ENCODE measurements at regions of chr11 and their contacts with region 1.

Region 1: GRCh38 chr11:77411717-77412441 is 62.0 kb downstream of the PAK1 start:
- DNase-seq: peak; percentile 86
- H3K4me3 Mint-ChIP-seq: peak overlapping the region; percentile 88
- H3K27ac Mint-ChIP-seq: peak overlapping the region; percentile 74
- H3K4me1 Mint-ChIP-seq: peaks cover 52% of the 10 kb centered on the region
- H3K27me3 Mint-ChIP-seq: no peaks in the 10 kb centered on the region
- CTCF ChIP-seq: no peak

Region 2: DNA sequence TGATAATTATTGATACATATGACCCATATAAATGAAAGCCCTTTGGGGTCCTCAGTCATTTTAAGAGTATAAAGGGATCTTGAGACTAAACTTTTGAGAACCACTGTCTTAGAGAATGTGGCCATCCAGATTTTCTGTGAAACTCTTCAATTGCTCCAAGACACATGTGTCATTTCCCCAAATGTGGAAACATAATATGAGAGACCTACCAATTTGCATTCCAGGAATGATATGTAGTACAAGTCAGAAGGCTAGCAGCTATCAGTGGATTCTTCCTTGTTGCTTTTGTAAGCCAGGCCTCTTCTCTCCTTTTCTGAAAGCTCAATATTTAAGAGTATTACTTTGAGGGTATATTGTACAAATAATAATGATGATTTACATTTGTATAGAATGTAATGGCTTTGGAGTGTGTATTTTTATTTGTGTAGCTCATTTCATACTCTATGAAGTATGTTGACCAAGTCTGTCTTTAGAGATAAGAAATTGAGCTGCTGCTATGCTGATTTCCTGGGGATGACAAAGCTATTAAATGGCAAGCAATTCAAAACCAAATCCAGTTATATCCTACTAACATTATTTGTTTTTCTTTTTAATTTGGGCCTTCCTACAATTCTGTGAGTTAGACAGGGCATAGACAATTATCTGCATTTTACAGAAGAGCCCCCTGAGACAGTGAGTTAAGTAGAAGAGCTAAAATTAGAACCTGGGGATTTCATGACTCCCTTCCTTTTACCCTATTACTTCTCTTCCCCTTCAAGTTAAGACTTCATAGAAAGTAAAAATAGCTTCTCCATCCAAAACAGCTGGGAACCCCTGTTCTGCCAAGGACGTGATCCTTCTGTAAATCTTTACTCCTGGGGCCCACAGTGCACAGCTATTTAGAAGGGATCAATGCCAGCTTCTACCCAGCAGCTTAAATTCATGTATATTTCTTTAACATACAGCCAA is 1337.5 kb before region 1 on chr11:
- CTCF ChIA-PET with region 1: no interaction called
- intact Hi-C with region 1: no loop called
- DNase-seq: no peak
- H3K4me3 Mint-ChIP-seq: no peak overlapping the region
- H3K27ac Mint-ChIP-seq: no peak overlapping the region
- H3K4me1 Mint-ChIP-seq: peaks cover 8% of the 10 kb centered on the region
- H3K27me3 Mint-ChIP-seq: no peaks in the 10 kb centered on the region
- CTCF ChIP-seq: no peak

Region 3: DNA sequence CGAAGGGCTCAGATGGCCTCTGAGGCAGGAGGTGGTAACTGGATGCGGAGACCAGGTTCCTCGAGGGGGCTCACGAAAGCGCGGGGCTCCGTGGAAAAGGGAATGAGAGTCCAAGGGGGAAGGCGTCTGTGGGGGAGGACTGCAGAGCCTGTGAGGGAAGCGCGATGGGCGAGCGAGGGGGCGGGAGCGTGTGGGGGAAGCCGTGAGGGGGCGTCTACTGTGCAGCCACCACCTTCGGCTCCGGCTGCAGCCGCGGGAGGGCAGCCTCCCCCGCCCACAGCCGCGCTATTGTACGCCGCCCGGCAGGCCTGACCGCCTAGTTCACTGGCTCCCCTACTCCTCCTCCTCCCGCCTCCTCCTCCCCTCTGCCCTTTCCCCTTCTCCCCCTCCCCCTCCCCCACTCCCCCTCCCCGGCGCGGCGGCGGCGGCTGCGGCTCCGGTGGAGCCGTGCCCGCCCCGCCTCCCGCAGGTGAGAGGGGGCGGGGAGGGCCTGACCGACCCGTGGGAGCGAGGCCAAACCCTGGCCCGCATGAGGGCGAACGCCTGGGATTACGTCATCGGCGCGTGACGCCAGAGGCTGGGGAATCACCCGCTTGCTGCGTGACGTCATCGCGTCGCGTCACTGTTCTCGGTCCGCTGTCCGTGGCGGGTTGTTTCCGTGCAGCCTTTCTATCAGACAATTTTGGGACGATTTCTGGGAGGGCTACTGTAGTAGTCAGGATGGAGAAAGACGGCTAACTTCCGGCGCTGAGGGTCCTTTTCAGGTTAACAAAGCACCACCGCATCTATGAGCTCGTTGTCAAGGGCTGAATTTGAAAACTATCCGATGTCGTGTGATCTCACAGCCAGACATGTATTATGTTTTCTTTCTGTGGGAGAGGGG is 62.2 kb after region 1 on chr11 and contains the start of gene PAK1:
- CTCF ChIA-PET with region 1: interaction called, 10 read pairs
- intact Hi-C with region 1: loop called (anchors 5 kb)
- DNase-seq: peak; percentile 92
- H3K4me3 Mint-ChIP-seq: peak within 1 kb of the TSS; percentile 73
- H3K27ac Mint-ChIP-seq: peak within 1 kb of the TSS; percentile 98
- H3K4me1 Mint-ChIP-seq: peaks cover 39% of the 10 kb centered on the region
- H3K27me3 Mint-ChIP-seq: no peaks in the 10 kb centered on the region
- CTCF ChIP-seq: no peak
- total RNA-seq, gene PAK1: 56.3 and 58.5 TPM in 2 replicates

Region 4: DNA sequence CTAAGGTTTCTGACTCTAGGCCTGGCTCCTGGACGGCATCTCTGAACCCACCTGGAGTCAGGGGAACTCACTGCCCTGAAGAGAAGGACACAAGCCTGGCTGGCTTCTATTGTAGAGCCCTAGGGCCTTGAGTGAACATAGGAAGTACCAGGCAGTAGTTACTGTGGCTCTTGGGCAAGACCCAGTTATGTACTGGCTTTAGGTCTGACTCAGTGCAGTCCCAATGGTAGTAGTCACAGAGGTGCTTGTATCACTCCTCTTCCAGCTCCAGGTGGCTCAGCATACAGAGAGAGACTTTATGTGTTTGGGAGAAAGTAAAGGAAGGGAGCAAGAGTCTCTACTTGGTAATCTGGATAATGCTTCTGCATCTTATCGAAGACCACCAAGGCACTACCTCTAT is 75.9 kb after region 1 on chr11:
- CTCF ChIA-PET with region 1: no interaction called
- intact Hi-C with region 1: no loop called
- DNase-seq: no peak
- H3K4me3 Mint-ChIP-seq: no peak overlapping the region
- H3K27ac Mint-ChIP-seq: no peak overlapping the region
- H3K4me1 Mint-ChIP-seq: no peaks in the 10 kb centered on the region
- H3K27me3 Mint-ChIP-seq: peaks cover 13% of the 10 kb centered on the region
- CTCF ChIP-seq: no peak

Measured in Calu3 (cell line).